H1 (cell line): ENCODE measurements at regions of chr6 and their contacts with region 1.

Region 1: GRCh38 chr6:2931970-2932748 is 29.1 kb upstream of the SERPINB9 start:
- DNase-seq: peak; percentile 78 to 96
- H3K4me3 ChIP-seq: no peak overlapping the region
- H3K27ac ChIP-seq: no peak overlapping the region
- H3K4me1 ChIP-seq: peaks cover 15 to 28% (median 19%) of the 10 kb centered on the region in 4 experiments
- H3K27me3 ChIP-seq: no peaks in the 10 kb centered on the region
- CTCF ChIP-seq: peak; percentile 89 to 100 (median 92)
- EP300 ChIP-seq: no peak
- POLR2A ChIP-seq: no peak
- RAD21 ChIP-seq: peak; percentile 93

Region 2: GRCh38 chr6:2791124-2791974 is 140.8 kb before region 1 on chr6:
- CTCF ChIA-PET with region 1: interaction called, 19 read pairs
- POLR2A ChIA-PET with region 1: no interaction called
- DNase-seq: no peak
- H3K4me3 ChIP-seq: no peak overlapping the region
- H3K27ac ChIP-seq: no peak overlapping the region
- H3K4me1 ChIP-seq: no peaks in the 10 kb centered on the region; a peak in 1 of 7 replicates
- H3K27me3 ChIP-seq: no peaks in the 10 kb centered on the region
- CTCF ChIP-seq: peak; percentile 64 to 89 (median 88)
- EP300 ChIP-seq: no peak
- POLR2A ChIP-seq: no peak
- RAD21 ChIP-seq: peak; percentile 90 to 95

Region 3: DNA sequence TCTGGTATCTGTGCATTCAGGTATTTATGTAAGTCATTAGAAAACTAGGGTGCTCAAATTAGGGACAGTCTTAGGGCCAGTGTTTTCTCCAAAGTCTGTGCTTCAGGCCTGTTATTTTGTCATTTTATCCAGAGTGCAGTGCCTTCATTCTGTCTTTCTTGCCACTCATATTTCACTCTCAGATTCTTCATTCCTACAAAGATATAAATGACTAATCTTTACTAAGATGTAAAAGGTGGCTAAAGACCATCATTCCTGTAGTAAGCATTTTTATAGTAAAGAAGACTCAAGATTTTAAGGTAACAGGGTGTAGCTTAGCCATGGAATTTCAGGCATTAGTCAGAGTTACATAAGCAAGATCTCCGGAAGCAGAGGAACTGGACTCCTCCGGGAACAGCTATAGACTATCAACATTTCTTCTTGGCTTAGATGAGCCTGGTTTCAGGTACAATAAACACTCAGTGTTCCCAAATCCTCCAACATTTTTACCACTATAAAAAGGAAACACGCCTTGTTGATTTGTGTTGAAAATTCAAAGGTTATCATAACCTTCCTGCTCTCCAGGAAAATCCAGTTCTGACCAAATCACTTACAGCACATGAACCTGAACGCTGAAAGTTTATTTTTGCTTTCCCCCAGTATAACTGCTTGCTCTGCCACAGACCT is 114.2 kb before region 1 on chr6:
- CTCF ChIA-PET with region 1: no interaction called
- POLR2A ChIA-PET with region 1: no interaction called
- DNase-seq: no peak
- H3K4me3 ChIP-seq: no peak overlapping the region
- H3K27ac ChIP-seq: no peak overlapping the region
- H3K4me1 ChIP-seq: no peaks in the 10 kb centered on the region
- H3K27me3 ChIP-seq: no peaks in the 10 kb centered on the region
- CTCF ChIP-seq: no peak
- EP300 ChIP-seq: no peak
- POLR2A ChIP-seq: no peak
- RAD21 ChIP-seq: no peak

Region 4: GRCh38 chr6:2848851-2849250 is 83.3 kb before region 1 on chr6:
- CTCF ChIA-PET with region 1: interaction called, 129 read pairs
- POLR2A ChIA-PET with region 1: interaction called, 16 read pairs
- DNase-seq: no peak
- H3K4me3 ChIP-seq: no peak overlapping the region
- H3K27ac ChIP-seq: no peak overlapping the region
- H3K4me1 ChIP-seq: peaks cover 4 to 25% (median 9%) of the 10 kb centered on the region in 4 experiments
- H3K27me3 ChIP-seq: no peaks in the 10 kb centered on the region
- CTCF ChIP-seq: no peak
- EP300 ChIP-seq: no peak
- POLR2A ChIP-seq: peak in 1 of 2 experiments; percentile 62; a peak in 1 of 3 replicates
- RAD21 ChIP-seq: no peak

Region 5: DNA sequence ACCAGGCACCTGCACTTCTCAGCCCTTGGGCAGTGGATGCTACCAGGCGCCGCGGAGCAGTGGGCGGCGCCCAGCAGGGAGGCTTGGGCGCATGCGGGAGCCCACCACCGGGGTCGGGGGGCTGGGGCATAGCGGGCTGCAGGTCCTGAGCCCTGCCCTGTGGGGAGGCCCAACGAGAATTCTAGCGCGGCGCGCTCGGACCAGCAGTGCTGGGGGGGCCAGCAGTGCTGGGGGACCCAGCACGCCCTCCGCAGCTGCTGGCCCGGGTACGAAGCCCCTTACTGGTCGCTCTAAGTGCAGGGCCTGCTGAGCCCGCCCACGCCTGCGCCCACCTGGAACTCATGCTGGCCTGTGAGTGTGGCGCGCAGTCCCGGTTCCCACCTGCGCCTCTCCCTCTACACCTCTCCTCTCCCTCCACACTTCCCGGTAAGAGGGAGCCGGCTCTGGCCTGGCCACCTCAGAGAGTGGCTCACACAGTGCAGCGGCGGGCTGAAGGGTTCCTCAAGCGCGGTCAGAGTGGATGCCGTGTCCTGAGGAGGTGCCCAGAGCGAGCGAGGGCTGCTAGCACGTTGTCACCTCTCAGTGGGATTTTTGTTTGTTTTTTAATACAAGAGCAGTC is 62.0 kb before region 1 on chr6:
- CTCF ChIA-PET with region 1: interaction called, 7 read pairs
- POLR2A ChIA-PET with region 1: interaction called, 19 read pairs
- DNase-seq: no peak
- H3K4me3 ChIP-seq: no peak overlapping the region
- H3K27ac ChIP-seq: no peak overlapping the region
- H3K4me1 ChIP-seq: peaks cover 12 to 21% (median 16%) of the 10 kb centered on the region in 4 experiments
- H3K27me3 ChIP-seq: peaks cover 0 to 7% (median 6%) of the 10 kb centered on the region in 4 experiments; a peak in 3 of 7 replicates
- CTCF ChIP-seq: no peak
- EP300 ChIP-seq: no peak
- POLR2A ChIP-seq: no peak
- RAD21 ChIP-seq: no peak

Region 6: DNA sequence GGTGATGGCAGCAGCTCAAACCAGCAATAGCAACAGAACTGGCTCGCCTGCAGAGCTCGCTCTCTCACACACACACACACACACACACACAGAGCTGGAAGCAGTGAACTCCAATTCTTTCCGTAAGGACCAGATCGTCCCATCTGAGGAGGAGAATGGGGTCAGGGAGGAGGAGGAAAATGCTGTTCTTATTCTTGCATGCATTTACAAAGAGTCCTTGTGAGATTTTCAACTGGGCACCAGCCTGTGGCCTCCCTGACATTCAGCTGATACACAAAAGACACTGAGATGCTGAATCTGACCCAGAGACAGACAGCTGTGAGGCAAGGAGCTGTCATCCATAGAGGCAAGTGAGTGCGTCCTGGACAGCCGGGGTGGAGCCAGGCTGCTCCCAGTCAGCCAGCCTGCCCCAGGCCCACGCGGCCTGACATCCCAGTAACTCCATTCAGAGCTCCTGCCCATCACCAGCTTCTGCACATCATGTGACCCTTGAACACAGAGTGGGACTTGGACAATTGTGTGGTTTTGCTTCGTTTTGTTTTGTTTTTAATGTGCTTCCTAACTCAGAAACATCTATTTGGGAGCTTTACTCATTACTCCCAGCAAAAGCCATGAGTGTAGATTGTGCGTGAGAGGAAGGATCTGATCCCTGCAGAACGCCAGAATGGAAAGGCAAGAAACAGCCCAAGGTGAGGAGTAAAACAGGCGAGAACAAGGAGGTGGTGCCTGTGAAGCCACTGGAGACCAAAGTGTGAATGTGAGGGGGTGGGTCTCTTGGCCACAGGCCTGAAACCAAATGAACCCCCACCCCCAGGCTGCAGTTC is 31.1 kb before region 1 on chr6:
- CTCF ChIA-PET with region 1: interaction called, 32 read pairs
- POLR2A ChIA-PET with region 1: interaction called, 3 read pairs
- DNase-seq: no peak
- H3K4me3 ChIP-seq: peak overlapping the region; percentile 1 to 80 (median 41); a peak in 5 of 8 replicates
- H3K27ac ChIP-seq: no peak overlapping the region
- H3K4me1 ChIP-seq: peaks cover 3 to 23% (median 4%) of the 10 kb centered on the region in 4 experiments; a peak in 6 of 7 replicates
- H3K27me3 ChIP-seq: peaks cover 0 to 2% (median 0%) of the 10 kb centered on the region in 4 experiments; a peak in 2 of 7 replicates
- CTCF ChIP-seq: no peak
- EP300 ChIP-seq: no peak
- POLR2A ChIP-seq: no peak
- RAD21 ChIP-seq: no peak

Region 7: DNA sequence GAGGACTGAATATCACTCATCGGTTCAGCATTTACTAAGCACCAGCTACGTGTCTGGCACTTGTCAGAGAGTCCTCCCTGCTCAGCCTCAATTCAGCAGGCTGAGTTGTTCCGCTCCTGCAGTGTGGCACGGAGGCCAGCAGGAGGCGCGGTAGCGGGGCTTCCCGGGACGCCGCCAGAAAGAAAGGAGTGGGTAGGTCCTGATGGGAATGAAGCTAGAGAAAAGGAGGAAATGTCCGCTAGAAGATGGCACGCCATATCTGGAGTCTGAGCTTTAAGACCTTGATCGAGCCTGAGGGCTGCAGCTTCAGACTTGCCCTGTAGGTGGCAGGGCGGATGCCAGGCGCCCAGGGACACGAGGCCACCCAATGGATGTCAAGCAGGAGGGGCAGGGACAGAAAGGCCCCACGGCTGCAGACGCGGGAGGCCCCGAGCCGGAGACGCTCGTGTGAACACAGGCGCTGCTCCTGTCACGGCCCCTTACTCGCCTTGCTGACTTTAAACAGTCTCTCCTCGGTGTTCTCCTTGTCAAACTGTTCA is 20.5 kb after region 1 on chr6:
- CTCF ChIA-PET with region 1: interaction called, 293 read pairs
- POLR2A ChIA-PET with region 1: interaction called, 5 read pairs
- DNase-seq: peak; percentile 89 to 97
- H3K4me3 ChIP-seq: no peak overlapping the region; a peak in 1 of 8 replicates
- H3K27ac ChIP-seq: no peak overlapping the region
- H3K4me1 ChIP-seq: peaks cover 0 to 7% (median 3%) of the 10 kb centered on the region in 4 experiments; a peak in 6 of 7 replicates
- H3K27me3 ChIP-seq: no peaks in the 10 kb centered on the region
- CTCF ChIP-seq: peak; percentile 79 to 99 (median 89)
- EP300 ChIP-seq: no peak
- POLR2A ChIP-seq: no peak
- RAD21 ChIP-seq: peak; percentile 60 to 74

Region 8: DNA sequence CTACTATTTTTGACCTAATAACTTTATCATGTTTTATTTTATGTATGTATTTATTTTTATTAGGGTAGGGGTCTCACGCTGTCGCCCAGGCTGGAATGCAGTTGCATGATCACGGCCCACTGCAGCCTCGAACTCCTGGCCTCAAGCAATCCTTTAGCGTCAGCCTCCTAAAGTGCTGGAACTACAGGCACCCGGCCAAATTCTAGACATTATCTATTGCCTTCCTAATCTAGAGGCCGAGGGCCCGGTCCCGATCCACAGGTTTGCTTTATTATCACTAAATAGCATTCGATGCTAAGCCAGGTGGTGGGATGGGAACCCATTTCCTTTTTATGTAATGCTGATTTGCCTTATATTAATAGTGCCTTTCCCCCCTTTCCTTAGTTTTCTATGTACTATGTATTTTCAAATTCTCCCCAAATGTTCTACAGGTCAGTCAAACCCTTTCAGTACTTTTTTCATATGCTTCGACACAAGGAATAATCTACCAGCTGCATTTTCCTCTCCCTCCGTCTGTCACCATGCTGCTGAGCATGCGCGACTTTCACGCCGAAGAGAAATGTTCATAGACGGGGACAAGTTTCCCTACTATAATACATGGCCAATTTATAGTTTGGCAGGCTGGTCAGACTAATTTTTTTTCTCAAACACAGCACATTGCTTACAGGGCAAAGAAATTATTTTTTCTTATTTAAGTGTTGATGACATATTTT is 32.8 kb after region 1 on chr6:
- CTCF ChIA-PET with region 1: no interaction called
- POLR2A ChIA-PET with region 1: no interaction called
- DNase-seq: no peak
- H3K4me3 ChIP-seq: no peak overlapping the region
- H3K27ac ChIP-seq: no peak overlapping the region
- H3K4me1 ChIP-seq: peaks cover 12 to 16% (median 15%) of the 10 kb centered on the region in 4 experiments
- H3K27me3 ChIP-seq: no peaks in the 10 kb centered on the region
- CTCF ChIP-seq: no peak
- EP300 ChIP-seq: no peak
- POLR2A ChIP-seq: no peak
- RAD21 ChIP-seq: no peak

Region 9: DNA sequence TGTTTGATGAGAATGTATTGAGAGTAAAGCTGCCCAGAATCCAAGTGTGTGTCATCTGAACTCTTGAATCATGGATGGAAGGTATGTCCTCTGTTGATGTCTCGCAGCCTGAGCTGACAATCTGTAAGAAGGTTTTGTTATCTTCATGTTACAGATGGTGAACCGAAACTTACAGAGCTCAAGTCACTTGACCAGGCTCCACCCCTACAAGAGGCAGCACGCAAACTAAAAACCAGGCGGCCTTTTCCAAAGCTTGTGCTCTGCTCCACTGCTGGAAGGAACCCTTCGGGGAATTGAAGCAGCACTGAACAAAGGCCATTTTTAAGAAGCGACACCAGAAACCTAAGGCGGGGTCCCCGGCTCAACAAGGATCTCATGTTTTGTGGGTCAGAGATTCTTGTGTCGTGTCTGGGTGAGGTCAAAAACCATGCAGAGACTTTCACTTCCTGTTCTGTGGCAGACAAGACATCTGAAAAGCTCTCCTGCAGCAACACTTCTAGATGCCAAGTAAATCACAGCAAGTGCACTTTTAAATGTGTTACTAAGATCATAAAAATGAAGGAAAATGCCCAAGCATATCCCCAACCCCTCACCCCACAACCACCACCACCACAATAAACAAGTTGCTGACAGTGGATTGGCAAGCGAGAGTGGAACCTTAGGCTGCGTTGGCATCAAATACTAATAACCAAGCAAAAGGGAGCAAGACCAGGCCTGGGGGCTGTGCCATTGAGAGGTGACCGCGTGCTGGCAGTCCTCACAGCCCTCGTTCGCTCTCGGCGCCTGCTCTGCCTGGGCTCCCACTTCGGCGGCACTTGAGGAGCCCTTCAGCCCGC is 94.8 kb after region 1 on chr6:
- CTCF ChIA-PET with region 1: no interaction called
- POLR2A ChIA-PET with region 1: no interaction called
- DNase-seq: no peak
- H3K4me3 ChIP-seq: no peak overlapping the region
- H3K27ac ChIP-seq: no peak overlapping the region
- H3K4me1 ChIP-seq: peaks cover 7 to 17% (median 13%) of the 10 kb centered on the region in 4 experiments
- H3K27me3 ChIP-seq: no peaks in the 10 kb centered on the region
- CTCF ChIP-seq: no peak
- EP300 ChIP-seq: no peak
- POLR2A ChIP-seq: no peak
- RAD21 ChIP-seq: no peak